T-cell (primary cell): ENCODE measurements at regions of chr14 and their contacts with region 1.

Region 1: GRCh38 chr14:67710209-67710608 is 8.5 kb downstream of the RDH12 start:
- DNase-seq: no peak
- ATAC-seq: no peak
- H3K4me3 ChIP-seq: no peak overlapping the region
- H3K4me3 Mint-ChIP-seq: no peak overlapping the region
- H3K27ac ChIP-seq: no peak overlapping the region
- H3K27ac Mint-ChIP-seq: no peak overlapping the region
- H3K4me1 ChIP-seq: no peaks in the 10 kb centered on the region
- H3K4me1 Mint-ChIP-seq: no peaks in the 10 kb centered on the region
- H3K27me3 ChIP-seq: no peaks in the 10 kb centered on the region
- H3K27me3 Mint-ChIP-seq: no peaks in the 10 kb centered on the region

Region 2: DNA sequence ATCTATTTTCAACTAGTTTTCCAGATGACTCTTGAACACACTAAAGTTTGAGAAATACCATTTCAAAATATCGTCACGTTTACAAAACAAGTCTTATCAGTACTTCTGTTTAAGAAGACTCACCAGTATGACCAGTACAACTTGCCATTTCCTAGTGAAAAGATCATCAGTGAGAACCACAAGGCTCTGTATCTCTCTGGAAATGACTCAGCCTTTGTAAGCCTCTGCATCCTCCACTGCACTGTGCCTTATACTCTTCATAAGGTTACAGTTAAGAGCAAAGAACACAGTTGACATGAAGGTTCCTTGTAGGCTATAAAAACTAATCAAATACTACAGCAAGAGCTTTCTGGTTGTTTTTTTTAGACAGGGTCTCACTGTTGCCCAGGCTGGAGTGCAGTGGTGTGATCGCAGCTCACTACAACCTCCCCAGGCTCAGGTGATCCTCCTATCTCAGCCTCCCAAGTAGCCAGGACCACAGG is 30.0 kb before region 1 on chr14:
- CTCF ChIA-PET with region 1: no interaction called
- POLR2A ChIA-PET with region 1: no interaction called
- DNase-seq: no peak
- ATAC-seq: peak in 2 of 4 experiments; percentile 20 to 64
- H3K4me3 ChIP-seq: no peak overlapping the region
- H3K4me3 Mint-ChIP-seq: no peak overlapping the region
- H3K27ac ChIP-seq: no peak overlapping the region
- H3K27ac Mint-ChIP-seq: peak overlapping the region in 1 of 2 donors; percentile 14
- H3K4me1 ChIP-seq: peaks cover 0 to 4% of the 10 kb centered on the region in 2 experiments
- H3K4me1 Mint-ChIP-seq: peaks cover 13 to 30% (median 25%) of the 10 kb centered on the region in 3 donors
- H3K27me3 ChIP-seq: no peaks in the 10 kb centered on the region
- H3K27me3 Mint-ChIP-seq: no peaks in the 10 kb centered on the region

Region 3: DNA sequence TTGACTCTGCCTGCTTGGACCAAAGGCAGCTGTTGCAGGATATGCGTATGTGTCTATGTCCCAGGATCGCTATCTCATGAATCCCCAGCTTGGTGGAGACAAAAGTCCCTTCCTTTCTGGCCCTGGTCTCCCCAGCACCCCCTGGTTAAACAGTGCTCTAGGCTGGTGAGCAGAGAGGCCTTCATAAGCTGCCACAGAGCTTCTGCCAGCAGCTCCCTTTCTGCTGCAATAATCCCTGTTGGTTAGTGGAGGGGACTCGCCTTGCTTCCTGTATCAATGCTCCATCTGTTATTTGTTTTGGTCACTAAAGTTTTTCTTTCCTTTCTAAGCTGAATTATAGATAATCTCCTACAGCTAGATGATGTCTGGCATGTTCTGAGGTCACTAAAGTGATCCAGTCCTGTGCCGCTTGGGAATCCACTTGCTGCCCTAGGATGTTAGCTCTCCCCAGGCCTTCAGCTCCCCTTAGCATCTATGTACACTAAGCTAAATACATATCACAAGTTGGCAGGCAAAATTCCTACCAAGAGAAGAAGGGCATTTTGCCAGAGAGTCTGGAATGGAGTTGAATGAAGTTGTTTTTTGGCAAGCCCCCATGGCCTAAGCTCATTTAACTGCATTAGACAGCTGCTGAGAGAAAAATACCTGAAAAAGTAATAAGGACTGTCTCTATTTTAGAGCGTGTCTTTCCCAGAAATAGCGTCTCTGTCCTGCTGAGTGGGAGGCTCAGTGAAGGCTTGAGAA is 39.3 kb after region 1 on chr14:
- CTCF ChIA-PET with region 1: no interaction called
- POLR2A ChIA-PET with region 1: interaction called in 1 of 2 experiments, 19 read pairs
- DNase-seq: no peak
- ATAC-seq: no peak
- H3K4me3 ChIP-seq: no peak overlapping the region
- H3K4me3 Mint-ChIP-seq: no peak overlapping the region
- H3K27ac ChIP-seq: no peak overlapping the region
- H3K27ac Mint-ChIP-seq: no peak overlapping the region
- H3K4me1 ChIP-seq: no peaks in the 10 kb centered on the region
- H3K4me1 Mint-ChIP-seq: no peaks in the 10 kb centered on the region
- H3K27me3 ChIP-seq: no peaks in the 10 kb centered on the region
- H3K27me3 Mint-ChIP-seq: no peaks in the 10 kb centered on the region

Region 4: GRCh38 chr14:67797694-67798093 is 87.5 kb after region 1 on chr14:
- CTCF ChIA-PET with region 1: no interaction called
- POLR2A ChIA-PET with region 1: interaction called in 1 of 2 experiments, 10 read pairs
- DNase-seq: no peak
- ATAC-seq: no peak
- H3K4me3 ChIP-seq: no peak overlapping the region
- H3K4me3 Mint-ChIP-seq: no peak overlapping the region
- H3K27ac ChIP-seq: no peak overlapping the region
- H3K27ac Mint-ChIP-seq: no peak overlapping the region
- H3K4me1 ChIP-seq: no peaks in the 10 kb centered on the region
- H3K4me1 Mint-ChIP-seq: no peaks in the 10 kb centered on the region
- H3K27me3 ChIP-seq: no peaks in the 10 kb centered on the region
- H3K27me3 Mint-ChIP-seq: no peaks in the 10 kb centered on the region

Region 5: DNA sequence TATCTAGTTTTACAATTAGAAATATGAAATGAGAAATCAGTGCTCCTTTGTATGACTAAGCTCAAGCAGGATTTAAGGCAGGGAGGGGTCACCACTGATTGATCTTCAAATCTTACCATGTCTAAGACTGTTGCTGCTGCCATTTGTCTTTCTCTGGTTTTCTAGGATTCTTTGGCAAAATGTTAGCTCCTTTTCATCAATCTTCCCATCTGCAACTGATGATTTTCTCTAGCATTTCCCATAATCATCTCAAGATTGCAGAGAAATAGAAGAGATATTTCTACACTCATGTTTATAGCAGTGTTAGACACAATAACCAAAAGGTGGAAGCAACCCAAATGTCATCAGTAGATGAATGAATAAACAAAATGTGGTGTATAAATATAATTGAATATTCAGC is 284.3 kb after region 1 on chr14:
- CTCF ChIA-PET with region 1: no interaction called
- POLR2A ChIA-PET with region 1: interaction called in 1 of 2 experiments, 12 read pairs
- DNase-seq: no peak
- ATAC-seq: no peak
- H3K4me3 ChIP-seq: no peak overlapping the region
- H3K4me3 Mint-ChIP-seq: no peak overlapping the region
- H3K27ac ChIP-seq: no peak overlapping the region
- H3K27ac Mint-ChIP-seq: no peak overlapping the region
- H3K4me1 ChIP-seq: no peaks in the 10 kb centered on the region
- H3K4me1 Mint-ChIP-seq: no peaks in the 10 kb centered on the region
- H3K27me3 ChIP-seq: no peaks in the 10 kb centered on the region
- H3K27me3 Mint-ChIP-seq: no peaks in the 10 kb centered on the region

Region 6: DNA sequence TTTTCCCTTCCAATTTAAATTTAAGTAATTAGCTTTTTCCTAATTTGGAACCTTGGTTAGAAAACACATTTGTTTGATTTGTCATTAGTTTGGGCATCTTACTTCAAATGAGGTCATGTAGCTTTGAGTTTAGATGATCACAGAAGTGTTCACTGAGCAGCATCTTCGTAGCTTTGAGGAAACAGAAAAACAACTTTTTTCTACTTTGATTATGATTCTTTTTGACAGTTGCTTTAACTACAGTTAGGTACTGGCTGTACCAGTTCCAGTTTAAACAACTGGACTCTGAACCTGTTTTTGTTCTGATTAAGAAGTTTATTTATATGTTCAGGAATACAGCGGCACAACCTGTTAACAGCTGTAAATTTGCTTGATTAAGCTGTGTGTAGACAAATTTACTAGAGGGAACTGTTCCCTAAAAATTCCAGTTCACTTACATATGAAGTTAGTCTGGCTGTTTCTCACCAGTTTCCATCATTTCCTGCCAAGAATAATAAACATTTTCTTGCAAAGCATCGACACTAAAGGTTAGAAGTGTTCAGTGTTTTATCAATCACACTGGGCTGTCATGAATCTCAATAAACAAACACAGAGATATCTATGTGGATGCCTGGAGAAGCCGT is 301.3 kb after region 1 on chr14:
- CTCF ChIA-PET with region 1: no interaction called
- POLR2A ChIA-PET with region 1: no interaction called
- DNase-seq: no peak
- ATAC-seq: no peak
- H3K4me3 ChIP-seq: no peak overlapping the region
- H3K4me3 Mint-ChIP-seq: no peak overlapping the region
- H3K27ac ChIP-seq: no peak overlapping the region
- H3K27ac Mint-ChIP-seq: no peak overlapping the region
- H3K4me1 ChIP-seq: no peaks in the 10 kb centered on the region
- H3K4me1 Mint-ChIP-seq: no peaks in the 10 kb centered on the region
- H3K27me3 ChIP-seq: no peaks in the 10 kb centered on the region
- H3K27me3 Mint-ChIP-seq: no peaks in the 10 kb centered on the region